ENCODE measurements at regions of chr17 and their contacts with region 1.

Region 1: GRCh38 chr17:41548844-41549595 is 20.9 kb upstream of the KRT19 start:
- DNase-seq: peak; percentile 38
- H3K4me3 ChIP-seq: peak overlapping the region; percentile 19
- CTCF ChIP-seq: peak; percentile 99

Region 2: DNA sequence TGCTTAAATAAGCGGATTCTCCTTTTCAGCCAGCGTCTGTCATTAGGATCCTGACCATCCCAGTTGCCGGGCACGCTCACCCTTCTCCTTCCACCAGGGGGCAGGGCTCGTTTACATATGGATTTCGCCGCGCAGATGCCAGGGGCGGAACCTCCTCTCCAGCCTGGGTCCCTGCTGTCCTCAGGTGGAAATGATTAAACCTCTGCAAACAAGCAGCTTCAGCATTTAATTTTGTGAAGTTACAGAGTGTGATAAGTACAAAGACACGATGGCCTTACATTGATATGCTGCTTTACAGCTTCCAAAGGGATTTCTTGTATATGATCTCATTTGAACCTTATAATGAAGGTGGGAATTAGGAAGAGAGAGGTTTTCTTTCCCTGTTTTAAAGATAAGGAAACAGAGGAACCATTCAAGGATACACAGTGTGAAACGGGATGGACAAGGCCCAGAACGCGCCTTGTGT is 745.4 kb before region 1 on chr17:
- CTCF ChIA-PET with region 1: interaction called, 67 read pairs
- POLR2A ChIA-PET with region 1: no interaction called
- DNase-seq: no peak
- H3K4me3 ChIP-seq: no peak overlapping the region
- CTCF ChIP-seq: peak; percentile 92

Region 3: GRCh38 chr17:40909351-40909750 is 639.7 kb before region 1 on chr17:
- CTCF ChIA-PET with region 1: interaction called, 44 read pairs
- POLR2A ChIA-PET with region 1: interaction called, 12 read pairs
- DNase-seq: peak; percentile 93
- H3K4me3 ChIP-seq: no peak overlapping the region
- CTCF ChIP-seq: peak; percentile 64

Region 4: DNA sequence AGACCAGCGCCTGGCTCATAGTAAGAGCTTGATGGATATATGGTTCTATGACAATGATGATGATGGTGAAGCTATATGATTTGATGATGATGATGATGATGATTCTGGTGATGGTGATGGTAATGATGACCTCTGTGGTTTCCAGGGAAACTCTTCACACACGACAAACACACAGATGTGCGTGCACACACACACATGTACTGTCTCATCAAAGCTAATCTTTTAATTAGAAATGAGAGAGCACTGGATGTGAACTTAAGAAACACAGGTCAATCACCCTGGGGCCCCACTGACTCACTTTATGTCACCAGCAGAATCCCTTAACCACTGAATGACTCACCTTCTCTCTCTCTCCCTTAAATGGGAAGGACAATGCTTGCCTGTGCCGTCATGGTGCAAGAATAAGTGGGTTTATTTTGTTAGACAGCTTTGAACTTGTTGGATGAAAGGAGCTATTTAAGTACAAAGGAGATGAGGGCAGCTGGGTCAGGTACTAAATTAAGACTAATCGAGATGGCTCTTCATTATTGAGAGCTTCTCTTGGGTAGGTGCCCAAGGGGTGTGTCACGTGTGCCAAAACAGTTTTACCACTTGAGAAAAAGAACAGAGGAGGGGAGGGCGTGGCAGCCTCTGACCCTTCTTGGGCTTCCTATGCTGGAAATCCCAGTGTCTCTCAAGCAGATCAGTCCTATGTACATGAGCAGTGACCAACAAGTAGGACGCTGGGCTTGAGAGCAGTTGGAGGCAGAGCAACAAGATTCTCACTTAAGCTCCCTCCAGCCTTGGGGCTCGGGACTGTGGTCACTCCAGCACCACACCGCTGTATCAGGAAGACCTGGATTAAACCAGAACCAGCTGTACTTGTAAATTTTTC is 145.0 kb before region 1 on chr17:
- CTCF ChIA-PET with region 1: interaction called, 26 read pairs
- POLR2A ChIA-PET with region 1: no interaction called
- DNase-seq: peak; percentile 80
- H3K4me3 ChIP-seq: no peak overlapping the region
- CTCF ChIP-seq: no peak

Region 5: GRCh38 chr17:41527843-41528667 is 21.0 kb before region 1 on chr17 and contains the start of gene KRT19:
- CTCF ChIA-PET with region 1: interaction called, 29 read pairs
- POLR2A ChIA-PET with region 1: interaction called, 11 read pairs
- DNase-seq: no peak
- H3K4me3 ChIP-seq: peak within 1 kb of the TSS; percentile 69
- CTCF ChIP-seq: no peak

Region 6: DNA sequence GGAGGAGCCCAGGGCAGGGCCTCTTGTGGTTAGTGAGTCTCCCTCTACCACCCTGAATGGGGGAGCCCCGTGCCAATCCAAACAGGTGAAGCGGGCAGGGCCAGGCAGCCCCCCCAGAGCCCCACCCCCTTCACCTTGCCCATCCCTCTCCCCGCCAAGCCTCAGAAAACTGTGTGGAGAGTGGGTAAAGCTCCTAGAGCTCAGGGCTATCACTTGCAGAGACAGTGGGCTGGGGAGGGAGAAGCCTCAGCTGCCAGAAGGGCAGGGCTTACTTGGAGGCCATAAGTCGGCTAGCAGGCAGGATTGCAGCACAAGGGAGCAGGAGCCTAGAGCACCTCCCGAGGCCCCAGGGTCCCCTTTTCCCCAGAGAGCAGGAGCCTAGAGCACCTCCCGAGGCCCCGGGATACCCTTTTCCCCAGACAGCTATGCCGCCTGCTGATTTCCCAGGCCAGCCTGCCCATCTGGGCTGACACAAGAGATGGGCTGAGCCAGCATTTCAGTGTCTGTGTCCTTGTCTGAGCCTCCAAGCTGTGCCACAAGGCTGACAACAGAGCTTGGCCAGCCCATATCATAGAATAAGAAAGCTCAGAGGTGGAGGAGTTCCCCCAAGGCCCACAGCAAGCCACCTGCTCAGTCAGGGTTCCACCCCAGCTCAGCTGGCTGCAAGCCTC is 44.4 kb after region 1 on chr17:
- CTCF ChIA-PET with region 1: interaction called, 12 read pairs
- POLR2A ChIA-PET with region 1: no interaction called
- DNase-seq: no peak
- H3K4me3 ChIP-seq: no peak overlapping the region
- CTCF ChIP-seq: no peak

Region 7: GRCh38 chr17:41678907-41679739 is 130.1 kb after region 1 on chr17:
- CTCF ChIA-PET with region 1: interaction called, 11 read pairs
- POLR2A ChIA-PET with region 1: no interaction called
- DNase-seq: no peak
- H3K4me3 ChIP-seq: no peak overlapping the region; the same call in 1 of the 2 replicates
- CTCF ChIP-seq: no peak

Region 8: GRCh38 chr17:41801374-41802271 is 252.6 kb after region 1 on chr17:
- CTCF ChIA-PET with region 1: no interaction called
- POLR2A ChIA-PET with region 1: no interaction called
- DNase-seq: no peak
- H3K4me3 ChIP-seq: no peak overlapping the region; the same call in 1 of the 2 replicates
- CTCF ChIP-seq: peak; percentile 97